ENCODE measurements at regions of chr3 and their contacts with region 1.

Region 1: GRCh38 chr3:129824926-129825541 is 68.5 kb downstream of the TMCC1 start:
- DNase-seq: no peak
- H3K4me3 ChIP-seq: no peak overlapping the region
- H3K27ac ChIP-seq: no peak overlapping the region
- H3K4me1 ChIP-seq: peaks cover 4 to 95% (median 34%) of the 10 kb centered on the region in 6 donors
- H3K27me3 ChIP-seq: no peaks in the 10 kb centered on the region
- CTCF ChIP-seq: peak; percentile 35 to 77 (median 69)
- POLR2A ChIP-seq: no peak

Region 2: GRCh38 chr3:129490242-129491045 is 334.6 kb before region 1 on chr3:
- intact Hi-C with region 1: loop called (anchors 5 kb)
- DNase-seq: peak; percentile 90
- H3K4me3 ChIP-seq: no peak overlapping the region
- H3K27ac ChIP-seq: peak overlapping the region in 5 of 8 donors; percentile 20 to 71 (median 47)
- H3K4me1 ChIP-seq: peaks cover 0 to 42% (median 10%) of the 10 kb centered on the region in 6 donors
- H3K27me3 ChIP-seq: no peaks in the 10 kb centered on the region
- CTCF ChIP-seq: peak; percentile 70 to 93 (median 86)
- POLR2A ChIP-seq: peak in 1 of 3 donors; percentile 18

Region 3: DNA sequence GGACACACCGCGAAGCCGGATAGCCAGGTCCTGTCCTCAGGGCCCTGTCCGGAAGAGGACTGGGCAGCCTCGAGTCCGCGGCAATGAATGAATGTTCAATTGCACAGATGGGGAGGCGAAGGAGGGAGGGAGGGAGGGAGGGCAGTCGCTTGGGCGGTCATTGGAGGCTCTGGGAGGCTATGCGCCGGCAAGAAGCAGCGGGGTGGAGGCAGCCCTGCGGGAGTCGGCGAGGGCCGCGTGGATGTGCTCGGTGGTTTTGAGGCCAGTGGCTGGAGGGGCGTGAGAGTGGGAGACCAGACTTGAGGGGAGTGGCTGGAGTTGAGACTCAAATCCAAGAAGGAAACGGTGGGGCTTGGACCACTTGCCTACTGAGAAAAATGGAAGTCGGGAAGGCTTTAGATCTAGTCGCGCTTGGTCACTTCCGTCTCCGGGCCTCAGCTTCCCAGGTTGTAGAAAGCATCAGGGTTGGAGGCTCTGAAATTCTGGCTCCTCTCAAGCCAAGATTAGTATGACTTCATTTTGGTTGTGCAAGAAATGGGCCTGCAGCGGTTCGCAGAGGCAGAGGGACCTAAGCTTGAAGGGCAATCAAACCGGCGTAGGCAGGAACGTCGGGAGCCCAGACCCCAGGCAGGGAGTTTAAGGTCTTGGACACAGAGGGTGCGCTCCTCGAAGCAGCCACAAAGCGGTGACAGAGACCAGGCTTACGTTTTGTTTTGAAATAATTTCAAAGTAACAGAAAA is 197.4 kb before region 1 on chr3:
- intact Hi-C with region 1: loop called (anchors 5 kb)
- DNase-seq: peak; percentile 88
- H3K4me3 ChIP-seq: peak overlapping the region; percentile 38 to 82 (median 56)
- H3K27ac ChIP-seq: peak overlapping the region; percentile 89 to 96 (median 94)
- H3K4me1 ChIP-seq: peaks cover 40 to 65% (median 57%) of the 10 kb centered on the region in 6 donors
- H3K27me3 ChIP-seq: no peaks in the 10 kb centered on the region
- CTCF ChIP-seq: peak; percentile 48 to 88 (median 79)
- POLR2A ChIP-seq: peak in 1 of 3 donors; percentile 11

Region 4: GRCh38 chr3:129645290-129645689 is 179.7 kb before region 1 on chr3:
- intact Hi-C with region 1: loop called (anchors 5 kb)
- DNase-seq: no peak
- H3K4me3 ChIP-seq: no peak overlapping the region
- H3K27ac ChIP-seq: no peak overlapping the region
- H3K4me1 ChIP-seq: peaks cover 0 to 5% (median under 1%) of the 10 kb centered on the region in 6 donors
- H3K27me3 ChIP-seq: no peaks in the 10 kb centered on the region
- CTCF ChIP-seq: no peak
- POLR2A ChIP-seq: no peak

Measured in spleen (tissue), 13 donors.